IMR-90 (cell line): ENCODE measurements at regions of chr4 and their contacts with region 1.

Region 1: DNA sequence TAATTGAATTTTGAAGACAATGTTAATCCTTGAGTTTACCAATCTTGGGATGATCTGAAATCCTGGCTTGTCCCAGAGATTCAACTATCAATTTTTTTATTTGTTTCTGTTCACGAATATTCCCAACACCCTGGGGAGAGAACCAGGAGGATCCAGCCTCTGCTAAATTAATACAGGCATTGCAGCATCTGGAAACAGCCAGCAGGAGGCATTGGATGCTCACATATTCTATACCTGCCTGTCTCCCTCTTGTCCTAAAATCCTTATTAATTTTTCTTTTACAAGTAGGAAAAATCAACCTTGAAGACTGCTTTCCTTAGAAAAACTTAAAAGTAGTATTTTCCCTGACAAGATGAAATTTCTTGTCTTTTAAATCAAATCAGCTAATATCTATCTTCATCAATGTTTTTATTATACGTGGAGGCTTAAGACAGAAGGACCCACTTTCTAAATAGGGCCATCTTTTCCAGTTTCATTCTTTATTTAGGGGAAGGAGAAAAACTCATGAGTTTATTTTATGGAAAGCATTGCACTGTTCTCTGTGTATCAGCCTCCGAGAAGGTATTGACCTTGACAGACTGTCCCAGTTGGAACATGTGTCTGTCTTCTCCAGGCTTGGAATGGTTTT is 102.4 kb downstream of the CLNK start:
- DNase-seq: peak; percentile 69
- ATAC-seq: peak; percentile 82
- H3K4me3 ChIP-seq: no peak overlapping the region
- H3K27ac ChIP-seq: no peak overlapping the region
- H3K4me1 ChIP-seq: no peaks in the 10 kb centered on the region
- H3K27me3 ChIP-seq: peaks cover 4% of the 10 kb centered on the region
- CTCF ChIP-seq: peak; percentile 99
- POLR2A ChIP-seq: 0 out of 2 replicates have a peak, but pooled peaks have one; percentile 35
- RAD21 ChIP-seq: peak; percentile 99

Region 2: GRCh38 chr4:8940792-8941491 is 1641.2 kb before region 1 on chr4:
- CTCF ChIA-PET with region 1: no interaction called
- POLR2A ChIA-PET with region 1: no interaction called
- dilution Hi-C with region 1: no loop called
- in situ Hi-C with region 1: no loop called
- intact Hi-C with region 1: no loop called
- DNase-seq: no peak
- ATAC-seq: no peak
- H3K4me3 ChIP-seq: no peak overlapping the region
- H3K27ac ChIP-seq: no peak overlapping the region
- H3K4me1 ChIP-seq: no peaks in the 10 kb centered on the region
- H3K27me3 ChIP-seq: no peaks in the 10 kb centered on the region
- CTCF ChIP-seq: no peak
- POLR2A ChIP-seq: no peak
- RAD21 ChIP-seq: no peak

Region 3: GRCh38 chr4:10715696-10716095 is 133.5 kb after region 1 on chr4:
- CTCF ChIA-PET with region 1: no interaction called
- POLR2A ChIA-PET with region 1: no interaction called
- dilution Hi-C with region 1: no loop called
- in situ Hi-C with region 1: no loop called
- intact Hi-C with region 1: loop called (anchors 1 kb)
- DNase-seq: peak; percentile 57
- ATAC-seq: no peak
- H3K4me3 ChIP-seq: no peak overlapping the region
- H3K27ac ChIP-seq: no peak overlapping the region
- H3K4me1 ChIP-seq: no peaks in the 10 kb centered on the region
- H3K27me3 ChIP-seq: no peaks in the 10 kb centered on the region
- CTCF ChIP-seq: no peak
- POLR2A ChIP-seq: no peak
- RAD21 ChIP-seq: no peak

Region 4: GRCh38 chr4:10808591-10808990 is 226.4 kb after region 1 on chr4:
- CTCF ChIA-PET with region 1: no interaction called
- POLR2A ChIA-PET with region 1: no interaction called
- dilution Hi-C with region 1: no loop called
- in situ Hi-C with region 1: loop called (anchors 25 kb)
- intact Hi-C with region 1: no loop called
- DNase-seq: peak; percentile 68
- ATAC-seq: peak; percentile 32; the same call in 1 of the 2 replicates
- H3K4me3 ChIP-seq: no peak overlapping the region
- H3K27ac ChIP-seq: no peak overlapping the region
- H3K4me1 ChIP-seq: no peaks in the 10 kb centered on the region
- H3K27me3 ChIP-seq: no peaks in the 10 kb centered on the region; the same call in 1 of the 2 replicates
- CTCF ChIP-seq: no peak
- POLR2A ChIP-seq: no peak
- RAD21 ChIP-seq: no peak

Region 5: GRCh38 chr4:11418610-11419009 is 836.4 kb after region 1 on chr4:
- CTCF ChIA-PET with region 1: no interaction called
- POLR2A ChIA-PET with region 1: no interaction called
- dilution Hi-C with region 1: no loop called
- in situ Hi-C with region 1: loop called (anchors 5 kb)
- intact Hi-C with region 1: no loop called
- DNase-seq: peak; percentile 7
- ATAC-seq: 0 out of 2 replicates have a peak, but pooled peaks have one; percentile 32
- H3K4me3 ChIP-seq: no peak overlapping the region
- H3K27ac ChIP-seq: no peak overlapping the region
- H3K4me1 ChIP-seq: no peaks in the 10 kb centered on the region
- H3K27me3 ChIP-seq: no peaks in the 10 kb centered on the region; the same call in none of the 2 replicates
- CTCF ChIP-seq: no peak
- POLR2A ChIP-seq: no peak
- RAD21 ChIP-seq: no peak; the same call in 1 of the 2 replicates

Region 6: GRCh38 chr4:11623726-11624037 is 1041.5 kb after region 1 on chr4:
- CTCF ChIA-PET with region 1: no interaction called
- POLR2A ChIA-PET with region 1: no interaction called
- dilution Hi-C with region 1: no loop called
- in situ Hi-C with region 1: no loop called
- intact Hi-C with region 1: loop called (anchors 10 kb)
- DNase-seq: peak; percentile 27
- ATAC-seq: no peak
- H3K4me3 ChIP-seq: no peak overlapping the region
- H3K27ac ChIP-seq: no peak overlapping the region
- H3K4me1 ChIP-seq: peaks cover 6% of the 10 kb centered on the region
- H3K27me3 ChIP-seq: no peaks in the 10 kb centered on the region
- CTCF ChIP-seq: peak; percentile 28
- POLR2A ChIP-seq: no peak
- RAD21 ChIP-seq: no peak

Region 7: DNA sequence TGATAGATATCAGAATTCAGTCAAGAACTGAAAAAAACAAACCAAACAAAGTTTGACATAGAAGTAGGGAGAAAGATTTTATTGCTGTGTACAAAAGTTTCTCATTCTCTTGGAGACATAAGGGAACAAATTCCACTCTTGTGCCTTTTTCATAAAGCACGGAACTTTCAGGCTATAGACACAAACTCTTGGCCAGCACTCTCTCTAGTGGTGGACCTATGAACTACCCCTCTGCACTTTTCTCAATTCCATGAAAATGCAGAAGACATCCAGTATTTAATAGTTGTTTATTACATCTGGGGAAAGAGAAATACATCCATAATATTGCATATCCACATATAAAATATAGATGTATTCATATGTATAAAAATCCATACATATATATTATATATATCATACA is 1138.1 kb after region 1 on chr4:
- CTCF ChIA-PET with region 1: no interaction called
- POLR2A ChIA-PET with region 1: no interaction called
- dilution Hi-C with region 1: no loop called
- in situ Hi-C with region 1: loop called (anchors 10 kb)
- intact Hi-C with region 1: loop called (anchors 1 kb)
- DNase-seq: peak; percentile 67
- ATAC-seq: peak; percentile 89
- H3K4me3 ChIP-seq: no peak overlapping the region
- H3K27ac ChIP-seq: no peak overlapping the region
- H3K4me1 ChIP-seq: no peaks in the 10 kb centered on the region
- H3K27me3 ChIP-seq: no peaks in the 10 kb centered on the region
- CTCF ChIP-seq: peak; percentile 88
- POLR2A ChIP-seq: no peak
- RAD21 ChIP-seq: peak; percentile 89